Calu3 (cell line): ENCODE measurements at regions of chr12 and their contacts with region 1.

Region 1: GRCh38 chr12:7806863-7807487 is 17.8 kb downstream of the NANOG start:
- DNase-seq: peak; percentile 81
- H3K4me3 Mint-ChIP-seq: no peak overlapping the region
- H3K27ac Mint-ChIP-seq: no peak overlapping the region
- H3K4me1 Mint-ChIP-seq: no peaks in the 10 kb centered on the region
- H3K27me3 Mint-ChIP-seq: peaks cover 9% of the 10 kb centered on the region
- CTCF ChIP-seq: peak; percentile 62

Region 2: DNA sequence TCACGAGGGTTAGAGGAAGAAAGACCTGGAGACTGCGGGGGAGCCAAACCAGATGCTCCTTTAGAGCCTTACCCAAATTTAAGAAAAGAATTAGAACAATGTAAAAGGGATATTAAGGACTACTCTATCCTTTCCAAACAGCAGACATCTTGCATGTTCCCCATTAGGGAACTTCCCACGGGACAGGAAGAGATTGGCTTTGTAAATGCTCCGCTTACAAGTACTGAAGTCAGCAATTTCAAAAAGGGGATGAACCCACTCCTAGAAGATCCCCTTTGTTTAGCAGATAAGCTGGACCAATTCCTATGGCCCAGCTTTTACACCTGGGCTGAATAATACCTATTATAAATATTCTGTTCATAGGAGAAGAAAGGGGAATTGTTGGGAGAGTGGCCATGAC is 215.4 kb before region 1 on chr12:
- CTCF ChIA-PET with region 1: no interaction called
- intact Hi-C with region 1: no loop called
- DNase-seq: no peak
- H3K4me3 Mint-ChIP-seq: no peak overlapping the region
- H3K27ac Mint-ChIP-seq: no peak overlapping the region
- H3K4me1 Mint-ChIP-seq: peaks cover 9% of the 10 kb centered on the region
- H3K27me3 Mint-ChIP-seq: peaks cover 33% of the 10 kb centered on the region
- CTCF ChIP-seq: no peak

Region 3: DNA sequence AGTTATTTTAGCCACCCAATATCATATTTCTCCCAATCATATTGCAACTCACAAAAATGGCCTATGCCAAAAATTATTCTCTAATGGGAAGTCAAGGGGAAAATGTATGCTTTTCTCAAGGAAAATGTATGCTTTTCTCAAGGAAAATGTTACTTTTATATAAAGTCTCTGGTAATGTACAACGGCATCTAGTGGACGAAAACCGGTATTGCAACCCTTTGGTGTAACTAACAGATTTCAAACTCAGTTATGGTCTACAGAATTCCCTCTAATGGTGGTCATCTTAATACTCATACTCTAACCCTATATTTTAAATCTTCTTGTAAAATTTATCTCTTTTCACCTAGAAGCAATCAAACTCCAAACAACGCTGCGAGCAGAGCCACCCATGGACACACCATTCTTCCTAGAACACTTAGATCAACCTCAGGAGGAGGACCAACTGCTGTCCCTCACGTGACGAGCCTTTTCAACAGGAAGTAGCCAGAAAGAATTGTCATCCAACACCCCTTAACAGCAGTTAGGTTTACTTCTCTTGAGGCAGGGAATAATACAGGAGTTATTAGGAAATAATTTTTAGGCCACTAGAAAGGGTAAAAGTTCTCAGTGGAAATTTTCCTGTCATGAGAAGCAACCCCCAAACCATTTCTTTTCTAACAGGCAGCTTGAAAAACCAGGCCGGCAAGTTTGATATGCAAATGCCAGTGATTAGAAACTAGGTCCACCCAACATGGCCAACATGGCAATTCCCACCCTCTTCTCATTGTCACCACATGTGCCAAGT is 161.4 kb before region 1 on chr12:
- CTCF ChIA-PET with region 1: interaction called, 11 read pairs
- intact Hi-C with region 1: no loop called
- DNase-seq: no peak
- H3K4me3 Mint-ChIP-seq: no peak overlapping the region
- H3K27ac Mint-ChIP-seq: no peak overlapping the region
- H3K4me1 Mint-ChIP-seq: peaks cover 16% of the 10 kb centered on the region
- H3K27me3 Mint-ChIP-seq: peaks cover 8% of the 10 kb centered on the region
- CTCF ChIP-seq: peak; percentile 67

Region 4: GRCh38 chr12:7678738-7679137 is 128.2 kb before region 1 on chr12:
- CTCF ChIA-PET with region 1: interaction called, 11 read pairs
- intact Hi-C with region 1: loop called (anchors 1 kb)
- DNase-seq: no peak
- H3K4me3 Mint-ChIP-seq: no peak overlapping the region
- H3K27ac Mint-ChIP-seq: no peak overlapping the region
- H3K4me1 Mint-ChIP-seq: peaks cover 8% of the 10 kb centered on the region
- H3K27me3 Mint-ChIP-seq: no peaks in the 10 kb centered on the region
- CTCF ChIP-seq: no peak

Region 5: DNA sequence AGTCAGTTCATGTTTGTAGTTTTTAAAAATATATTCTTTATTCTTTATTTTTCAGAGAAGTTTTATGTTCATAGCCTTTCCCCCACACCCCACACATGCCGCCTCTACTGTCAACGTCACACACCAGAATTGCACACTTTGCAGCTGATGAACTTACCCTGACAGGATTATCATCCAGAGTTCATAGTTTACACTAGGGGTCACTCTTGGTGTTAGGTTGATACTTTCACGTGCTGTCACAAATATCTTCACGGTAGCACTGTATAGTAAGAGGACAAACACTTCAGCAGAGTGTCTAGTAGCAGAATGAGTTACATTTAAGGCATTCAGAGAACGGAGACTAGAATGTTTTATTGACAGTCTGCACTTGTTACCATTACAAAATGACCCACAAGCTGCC is 90.6 kb before region 1 on chr12:
- CTCF ChIA-PET with region 1: interaction called, 5 read pairs
- intact Hi-C with region 1: loop called (anchors 2 kb)
- DNase-seq: no peak
- H3K4me3 Mint-ChIP-seq: no peak overlapping the region
- H3K27ac Mint-ChIP-seq: no peak overlapping the region
- H3K4me1 Mint-ChIP-seq: no peaks in the 10 kb centered on the region
- H3K27me3 Mint-ChIP-seq: peaks cover 21% of the 10 kb centered on the region
- CTCF ChIP-seq: no peak

Region 6: DNA sequence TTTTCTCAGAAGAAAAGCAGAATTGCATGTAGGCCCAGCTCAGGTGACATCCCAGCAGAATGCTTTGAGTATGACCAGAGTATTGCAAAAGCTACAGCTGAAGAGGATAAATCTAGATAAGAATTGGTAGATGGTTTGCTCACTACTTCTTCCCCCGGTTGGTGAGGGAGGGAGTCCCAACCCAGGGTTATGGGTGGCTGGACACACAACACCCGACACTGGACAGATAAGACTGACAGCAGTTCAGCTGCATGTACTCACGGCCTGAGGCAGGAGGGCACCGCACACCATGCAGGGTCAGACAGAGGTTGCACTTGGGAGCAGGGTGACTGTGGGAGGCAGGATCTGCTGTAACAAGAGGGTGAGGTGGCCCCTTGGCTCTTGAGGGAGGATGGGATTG is 58.1 kb before region 1 on chr12:
- CTCF ChIA-PET with region 1: no interaction called
- intact Hi-C with region 1: no loop called
- DNase-seq: no peak
- H3K4me3 Mint-ChIP-seq: no peak overlapping the region
- H3K27ac Mint-ChIP-seq: no peak overlapping the region
- H3K4me1 Mint-ChIP-seq: no peaks in the 10 kb centered on the region
- H3K27me3 Mint-ChIP-seq: no peaks in the 10 kb centered on the region
- CTCF ChIP-seq: no peak